GM12878 (cell line): ENCODE measurements at regions of chr1 and their contacts with region 1.

Region 1: GRCh38 chr1:153095764-153096163 is 1.4 kb upstream of the SPRR2E start:
- DNase-seq: no peak
- ATAC-seq: no peak
- H3K4me3 ChIP-seq: no peak overlapping the region
- H3K27ac ChIP-seq: no peak overlapping the region
- H3K4me1 ChIP-seq: no peaks in the 10 kb centered on the region
- H3K27me3 ChIP-seq: no peaks in the 10 kb centered on the region
- CTCF ChIP-seq: no peak
- EP300 ChIP-seq: no peak
- POLR2A ChIP-seq: no peak
- RAD21 ChIP-seq: no peak

Region 2: GRCh38 chr1:153025797-153026196 is 70.0 kb before region 1 on chr1:
- CTCF ChIA-PET with region 1: no interaction called
- POLR2A ChIA-PET with region 1: no interaction called
- RAD21 ChIA-PET with region 1: no interaction called
- SMC1A ChIA-PET with region 1: no interaction called
- in situ Hi-C with region 1: no loop called
- intact Hi-C with region 1: no loop called
- DNase-seq: no peak
- ATAC-seq: no peak
- H3K4me3 ChIP-seq: no peak overlapping the region
- H3K27ac ChIP-seq: no peak overlapping the region
- H3K4me1 ChIP-seq: no peaks in the 10 kb centered on the region
- H3K27me3 ChIP-seq: no peaks in the 10 kb centered on the region
- CTCF ChIP-seq: no peak
- EP300 ChIP-seq: no peak
- POLR2A ChIP-seq: no peak
- RAD21 ChIP-seq: no peak

Region 3: GRCh38 chr1:153071511-153071910 is 24.3 kb before region 1 on chr1 and contains the start of gene SPRR2B:
- CTCF ChIA-PET with region 1: no interaction called
- POLR2A ChIA-PET with region 1: no interaction called
- RAD21 ChIA-PET with region 1: no interaction called
- SMC1A ChIA-PET with region 1: no interaction called
- in situ Hi-C with region 1: no loop called
- intact Hi-C with region 1: loop called (anchors 1 kb)
- DNase-seq: no peak
- ATAC-seq: no peak
- H3K4me3 ChIP-seq: no peak within 1 kb of the TSS
- H3K27ac ChIP-seq: no peak within 1 kb of the TSS
- H3K4me1 ChIP-seq: no peaks in the 10 kb centered on the region
- H3K27me3 ChIP-seq: no peaks in the 10 kb centered on the region
- CTCF ChIP-seq: no peak
- EP300 ChIP-seq: no peak
- POLR2A ChIP-seq: no peak
- RAD21 ChIP-seq: no peak
- polyA plus RNA-seq, gene SPRR2B: not detected